GM10248 (cell line): ENCODE measurements at regions of chr7 and their contacts with region 1.

Region 1: GRCh38 chr7:116588641-116589594 is 64.1 kb downstream of the CAV1 start:
- DNase-seq: no peak
- CTCF ChIP-seq: peak; percentile 66

Region 2: DNA sequence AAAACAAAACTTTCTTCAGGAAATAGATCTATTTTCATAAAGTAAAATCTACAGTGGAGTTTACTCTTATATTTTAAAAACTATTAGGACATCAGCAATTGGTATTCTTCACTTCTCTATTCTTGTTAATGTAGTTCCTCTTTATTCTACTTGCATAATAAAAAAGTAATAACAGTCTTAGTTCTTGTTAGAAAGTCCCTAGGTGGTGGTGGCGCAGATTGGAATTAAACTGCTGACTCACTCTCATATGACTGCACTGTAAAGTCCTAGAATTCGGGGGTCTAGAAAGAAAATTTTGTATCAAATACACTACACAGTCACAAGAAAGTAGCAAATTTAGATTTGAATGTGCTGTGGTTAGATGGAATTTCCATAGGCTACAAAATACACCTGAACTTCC is 423.2 kb before region 1 on chr7:
- CTCF ChIA-PET with region 1: interaction called, 13 read pairs
- POLR2A ChIA-PET with region 1: no interaction called
- DNase-seq: peak; percentile 29
- CTCF ChIP-seq: no peak

Region 3: GRCh38 chr7:116258734-116259133 is 330.2 kb before region 1 on chr7:
- CTCF ChIA-PET with region 1: interaction called, 116 read pairs
- POLR2A ChIA-PET with region 1: no interaction called
- DNase-seq: peak; percentile 24
- CTCF ChIP-seq: peak; percentile 67

Region 4: GRCh38 chr7:116601426-116601825 is 12.5 kb after region 1 on chr7:
- CTCF ChIA-PET with region 1: interaction called, 70 read pairs
- POLR2A ChIA-PET with region 1: no interaction called
- DNase-seq: no peak
- CTCF ChIP-seq: no peak

Region 5: DNA sequence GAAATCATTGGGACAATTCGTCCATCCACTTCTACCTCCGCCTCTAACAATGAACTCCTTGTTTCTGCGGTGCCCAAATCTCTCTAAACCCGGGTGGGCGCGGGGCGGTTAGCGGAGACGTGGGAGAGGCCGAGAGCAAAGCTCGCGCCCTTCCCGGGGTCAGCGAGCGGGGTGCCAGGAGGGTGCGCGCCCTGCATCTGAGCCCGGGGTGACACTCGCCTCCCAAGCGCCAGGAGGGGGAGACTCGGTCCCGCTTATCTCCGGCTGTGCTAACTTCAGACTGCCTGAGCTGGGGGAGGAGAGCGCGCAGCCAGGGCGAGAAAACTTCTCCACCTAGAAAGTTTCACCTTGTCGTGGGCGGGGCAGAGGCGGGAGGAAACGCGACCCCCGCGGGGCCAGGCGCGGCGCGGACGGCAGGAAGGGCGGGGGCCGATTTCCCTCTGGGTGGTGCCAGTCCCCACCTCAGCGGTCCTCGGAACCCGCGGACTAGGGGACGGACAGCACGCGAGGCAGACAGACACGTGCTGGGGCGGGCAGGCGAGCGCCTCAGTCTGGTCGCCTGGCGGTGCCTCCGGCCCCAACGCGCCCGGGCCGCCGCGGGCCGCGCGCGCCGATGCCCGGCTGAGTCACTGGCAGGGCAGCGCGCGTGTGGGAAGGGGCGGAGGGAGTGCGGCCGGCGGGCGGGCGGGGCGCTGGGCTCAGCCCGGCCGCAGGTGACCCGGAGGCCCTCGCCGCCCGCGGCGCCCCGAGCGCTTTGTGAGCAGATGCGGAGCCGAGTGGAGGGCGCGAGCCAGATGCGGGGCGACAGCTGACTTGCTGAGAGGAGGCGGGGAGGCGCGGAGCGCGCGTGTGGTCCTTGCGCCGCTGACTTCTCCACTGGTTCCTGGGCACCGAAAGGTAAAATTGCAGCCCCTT is 83.0 kb after region 1 on chr7 and contains the start of gene MET:
- CTCF ChIA-PET with region 1: interaction called, 14 read pairs
- POLR2A ChIA-PET with region 1: no interaction called
- DNase-seq: peak; percentile 76
- CTCF ChIP-seq: peak; percentile 57

Region 6: GRCh38 chr7:116815041-116815440 is 226.1 kb after region 1 on chr7:
- CTCF ChIA-PET with region 1: interaction called, 20 read pairs
- POLR2A ChIA-PET with region 1: no interaction called
- DNase-seq: no peak
- CTCF ChIP-seq: no peak